ENCODE measurements at regions of chr7 and their contacts with region 1.

Region 1: DNA sequence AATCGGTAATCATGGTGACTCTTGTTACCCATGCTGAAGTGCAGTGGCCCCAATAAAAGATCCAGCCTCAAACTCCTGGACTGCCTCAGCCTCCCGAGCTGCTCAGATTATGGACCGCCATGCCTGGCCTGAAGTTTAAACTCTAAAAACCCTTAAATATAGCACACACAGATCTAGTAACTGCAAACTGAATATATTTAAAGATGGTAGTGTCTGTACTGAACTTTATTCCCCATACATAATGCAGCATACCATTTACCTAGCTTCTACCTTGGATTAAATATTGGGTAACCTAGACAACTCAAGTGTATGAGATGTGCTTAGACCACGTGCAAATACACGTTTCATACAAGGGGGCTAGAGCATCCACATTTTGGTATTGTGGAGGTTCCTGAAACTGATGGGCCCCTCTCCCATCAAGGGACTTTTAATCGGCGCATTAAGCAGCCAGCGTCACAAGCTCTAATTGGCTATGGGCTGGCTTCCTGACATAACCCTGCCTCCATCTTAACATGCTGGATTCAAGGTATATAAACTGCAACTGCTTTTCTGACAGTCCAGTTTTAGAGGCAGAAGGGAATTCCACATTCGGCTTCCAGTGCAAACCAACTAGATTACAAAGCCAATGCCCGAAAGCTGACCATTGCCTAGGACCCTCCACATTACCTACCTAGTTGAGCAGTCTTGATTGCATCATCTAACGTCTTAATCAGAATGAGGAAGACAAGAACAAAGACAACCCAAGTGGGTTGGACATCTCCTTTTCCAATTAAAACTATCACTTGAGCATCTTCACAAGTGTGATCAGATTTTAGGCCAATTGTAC is 13.0 kb downstream of the HNRNPA2B1 start:
- DNase-seq: peak; percentile 65

Region 2: DNA sequence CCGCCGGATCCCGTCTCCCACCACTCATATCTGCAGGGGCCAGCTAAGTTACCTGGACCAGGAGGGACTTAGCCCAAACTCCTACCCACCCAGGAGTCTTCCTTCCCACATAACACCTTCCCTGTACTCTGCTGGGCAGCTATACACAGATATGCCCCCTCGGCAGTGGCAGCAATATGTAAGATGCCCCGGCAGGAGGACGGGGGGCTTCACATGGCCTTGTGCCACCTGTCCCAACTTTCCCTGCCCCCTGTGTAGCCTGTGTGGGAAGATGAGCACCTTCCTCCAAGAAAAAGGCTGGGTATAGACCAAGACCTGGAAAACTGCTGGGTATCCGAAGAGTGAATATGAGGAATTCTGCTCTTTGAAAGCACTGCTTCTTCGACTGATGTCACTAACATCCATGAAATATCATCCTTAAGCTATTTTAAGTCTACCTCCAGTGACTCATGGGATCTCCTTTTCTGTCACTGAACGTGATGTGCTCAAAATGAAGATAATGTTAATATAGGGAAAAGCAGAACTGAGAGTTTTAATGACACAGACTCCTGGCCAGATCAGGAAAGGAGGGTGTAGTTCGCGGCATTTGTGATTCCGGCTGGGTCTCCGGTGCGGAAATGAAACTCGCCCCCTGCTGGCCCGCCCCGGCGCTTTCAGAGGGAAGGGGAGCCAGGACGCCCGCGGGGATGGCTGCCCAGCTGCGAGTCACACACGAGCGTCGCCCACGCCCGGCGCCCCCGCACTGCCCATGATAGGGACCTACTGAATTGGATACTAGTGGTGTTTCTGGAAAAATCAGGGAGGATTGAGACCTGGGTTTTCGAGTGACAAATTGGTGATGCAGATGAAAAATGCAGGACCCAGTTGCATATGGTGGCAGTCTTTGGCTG is 292.4 kb before region 1 on chr7:
- in situ Hi-C with region 1: loop called (anchors 10 kb)
- DNase-seq: peak; percentile 60